Tibial artery (tissue), 4 donors: ENCODE measurements at regions of chr11 and their contacts with region 1.

Region 1: GRCh38 chr11:6431861-6432260 is 8.9 kb downstream of the HPX start:
- DNase-seq: no peak
- H3K4me3 ChIP-seq: no peak overlapping the region
- H3K27ac ChIP-seq: no peak overlapping the region
- H3K4me1 ChIP-seq: peaks cover 0 to 5% (median 0%) of the 10 kb centered on the region in 4 donors
- H3K27me3 ChIP-seq: no peaks in the 10 kb centered on the region
- CTCF ChIP-seq: no peak

Region 2: DNA sequence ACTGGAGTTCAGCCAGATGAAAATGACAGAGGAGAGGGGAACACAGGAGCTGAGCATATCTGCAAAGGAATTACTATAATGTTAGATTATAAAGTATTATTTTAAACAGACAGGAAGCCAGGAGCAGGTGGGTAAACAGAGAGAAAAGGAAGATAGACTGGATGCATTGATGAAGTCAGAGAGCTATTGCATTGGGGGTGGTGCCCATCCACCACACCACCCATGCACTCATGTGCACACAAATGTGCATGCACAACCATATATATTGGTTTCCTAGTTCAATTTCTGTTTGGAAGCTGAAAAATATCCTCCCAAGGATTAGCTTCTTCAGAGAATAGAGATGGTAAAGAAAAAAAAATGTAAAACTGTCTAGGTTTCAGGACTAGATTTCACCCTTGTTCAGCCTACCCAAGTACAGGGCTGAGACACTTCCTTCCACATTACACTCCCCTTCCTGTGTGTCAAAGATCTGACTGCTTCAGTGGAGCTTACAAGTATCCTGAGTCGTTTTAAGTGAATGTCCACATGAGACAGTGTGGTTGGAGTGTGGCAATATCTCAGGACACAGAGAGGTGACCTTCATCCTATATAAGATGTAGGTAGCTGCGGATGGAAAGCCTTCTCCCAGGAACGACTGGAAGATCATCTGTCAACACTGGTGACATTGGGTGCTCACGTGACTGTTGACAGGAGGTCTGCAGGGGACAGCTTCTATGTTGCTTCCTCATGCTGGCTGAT is 53.8 kb before region 1 on chr11:
- intact Hi-C with region 1: loop called (anchors 2 kb)
- DNase-seq: peak in 1 of 2 donors; percentile 38
- H3K4me3 ChIP-seq: no peak overlapping the region
- H3K27ac ChIP-seq: no peak overlapping the region
- H3K4me1 ChIP-seq: no peaks in the 10 kb centered on the region
- H3K27me3 ChIP-seq: peaks cover 0 to 2% of the 10 kb centered on the region in 2 donors
- CTCF ChIP-seq: no peak

Region 3: DNA sequence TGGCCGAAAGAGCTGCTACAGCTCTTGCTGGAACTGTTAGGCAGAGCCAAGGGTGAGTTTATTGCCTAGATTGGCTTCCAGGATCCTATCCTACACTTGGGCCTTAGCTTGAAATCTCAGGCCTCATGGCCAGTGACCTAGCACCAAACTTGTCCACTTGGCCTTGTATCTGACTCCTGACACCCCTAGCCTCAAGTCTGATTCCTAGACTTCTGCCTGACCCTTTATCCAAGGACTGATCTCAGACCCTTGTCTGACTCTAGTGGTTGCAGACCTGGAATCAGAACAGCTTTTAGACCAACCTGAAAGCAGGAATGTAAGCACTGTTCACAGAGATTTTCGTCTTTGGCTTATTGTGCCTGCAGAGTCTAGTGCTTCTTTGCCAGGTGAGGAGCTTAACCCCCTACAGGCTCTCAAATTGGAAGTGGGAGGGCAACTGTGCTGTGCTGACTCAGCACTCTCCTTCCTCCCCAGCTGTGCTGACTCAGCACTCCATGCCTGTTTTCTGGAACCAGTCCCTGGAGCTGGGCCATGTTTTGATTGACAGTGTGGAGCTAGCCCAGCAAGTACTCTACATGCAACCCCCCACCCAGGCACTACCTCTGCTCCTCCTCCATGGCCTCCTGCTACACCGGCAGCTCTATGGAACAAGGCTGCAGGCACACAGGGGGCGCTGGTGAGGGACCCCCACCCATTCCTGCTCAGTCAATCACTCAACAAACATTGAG is 136.5 kb after region 1 on chr11:
- intact Hi-C with region 1: no loop called
- DNase-seq: no peak
- H3K4me3 ChIP-seq: no peak overlapping the region
- H3K27ac ChIP-seq: no peak overlapping the region
- H3K4me1 ChIP-seq: peaks cover 0 to 22% (median 14%) of the 10 kb centered on the region in 4 donors
- H3K27me3 ChIP-seq: no peaks in the 10 kb centered on the region
- CTCF ChIP-seq: no peak